Thyroid gland (tissue), 4 donors: ENCODE measurements at regions of chr6 and their contacts with region 1.

Region 1: GRCh38 chr6:88982720-88983119 is 19.3 kb upstream of the RNGTT start:
- DNase-seq: peak; percentile 53 to 61
- H3K4me3 ChIP-seq: no peak overlapping the region
- H3K27ac ChIP-seq: no peak overlapping the region
- H3K4me1 ChIP-seq: no peaks in the 10 kb centered on the region
- H3K27me3 ChIP-seq: no peaks in the 10 kb centered on the region
- CTCF ChIP-seq: peak; percentile 37 to 85 (median 62)
- POLR2A ChIP-seq: no peak

Region 2: DNA sequence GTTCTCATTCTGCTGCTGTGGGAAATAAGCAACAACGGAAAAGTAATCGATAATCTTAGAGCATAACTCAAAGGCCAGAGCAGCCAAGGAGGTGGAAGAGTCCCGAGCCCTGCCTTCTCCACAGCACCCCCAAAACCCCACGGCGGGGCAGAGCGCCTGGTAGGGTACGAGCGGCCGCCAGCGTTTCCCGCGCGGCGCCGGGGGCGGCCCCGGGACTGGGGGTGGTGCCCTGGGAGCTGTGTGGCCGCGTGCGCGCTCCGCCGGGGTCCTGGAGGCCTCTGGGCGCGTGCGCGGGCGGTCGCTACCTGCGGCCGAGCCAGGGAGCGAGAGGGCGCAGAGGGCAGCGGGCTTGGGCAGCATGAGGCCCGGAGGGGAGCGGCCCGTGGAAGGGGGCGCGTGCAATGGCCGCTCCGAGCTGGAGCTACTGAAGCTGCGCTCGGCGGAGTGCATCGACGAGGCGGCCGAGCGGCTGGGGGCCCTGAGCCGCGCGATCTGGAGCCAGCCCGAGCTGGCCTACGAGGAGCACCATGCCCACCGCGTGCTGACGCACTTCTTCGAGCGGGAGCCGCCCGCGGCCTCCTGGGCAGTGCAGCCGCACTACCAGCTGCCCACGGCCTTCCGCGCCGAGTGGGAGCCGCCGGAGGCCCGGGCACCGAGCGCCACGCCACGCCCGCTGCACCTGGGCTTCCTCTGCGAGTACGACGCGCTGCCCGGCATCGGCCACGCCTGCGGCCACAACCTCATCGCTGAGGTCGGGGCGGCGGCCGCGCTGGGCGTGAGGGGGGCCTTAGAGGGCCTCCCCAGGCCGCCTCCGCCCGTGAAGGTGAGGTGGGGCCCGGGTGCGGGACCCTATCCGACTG is 163.3 kb after region 1 on chr6 and contains the start of gene PM20D2:
- intact Hi-C with region 1: loop called (anchors 10 kb)
- DNase-seq: peak; percentile 78 to 81
- H3K4me3 ChIP-seq: peak within 1 kb of the TSS; percentile 39 to 85 (median 73)
- H3K27ac ChIP-seq: peak within 1 kb of the TSS; percentile 62 to 87 (median 82)
- H3K4me1 ChIP-seq: peaks cover 0 to 7% of the 10 kb centered on the region in 2 donors
- H3K27me3 ChIP-seq: no peaks in the 10 kb centered on the region
- CTCF ChIP-seq: no peak
- POLR2A ChIP-seq: peak in 1 of 2 donors; percentile 86
- total RNA-seq, gene PM20D2: 21.5 to 33.3 (median 28.6) TPM

Region 3: DNA sequence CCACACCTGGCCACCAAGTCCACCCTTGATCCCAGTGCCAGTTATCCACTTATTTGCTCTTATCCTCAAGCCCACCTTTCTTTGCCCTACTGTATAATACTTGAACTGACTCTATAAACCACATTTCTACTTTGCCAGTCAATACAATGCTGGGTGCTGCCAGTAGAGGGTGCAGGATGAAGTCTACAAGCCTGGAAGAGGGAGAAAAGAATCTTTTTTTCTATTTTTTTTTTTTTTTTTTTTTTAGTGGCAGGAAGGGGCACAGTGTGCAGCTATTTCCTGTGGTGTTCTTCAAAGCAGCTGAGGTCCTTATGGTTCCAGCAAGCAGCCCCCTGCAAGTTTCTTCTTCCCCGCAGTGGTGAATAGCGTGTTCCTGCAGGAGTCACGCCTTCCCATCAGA is 256.6 kb after region 1 on chr6:
- intact Hi-C with region 1: loop called (anchors 5 kb)
- DNase-seq: no peak
- H3K4me3 ChIP-seq: no peak overlapping the region
- H3K27ac ChIP-seq: no peak overlapping the region
- H3K4me1 ChIP-seq: no peaks in the 10 kb centered on the region
- H3K27me3 ChIP-seq: no peaks in the 10 kb centered on the region
- CTCF ChIP-seq: peak in 1 of 6 experiments; percentile 11
- POLR2A ChIP-seq: no peak